Activated T-helper 1 cell treated with anti-CD3 and anti-CD28 coated beads, Interleukin-12 subunit alpha, Interleukin-12 subunit beta, Interleukin-2, Interleukin-4 antibody, amounts not matched to agents 30 ng/mL and 10 ng/mL and 1 ng/mL, durations not matched to agents 14 hours and 24 hours and 36 hours (primary cell): ENCODE measurements at regions of chr16 and their contacts with region 1.

Region 1: DNA sequence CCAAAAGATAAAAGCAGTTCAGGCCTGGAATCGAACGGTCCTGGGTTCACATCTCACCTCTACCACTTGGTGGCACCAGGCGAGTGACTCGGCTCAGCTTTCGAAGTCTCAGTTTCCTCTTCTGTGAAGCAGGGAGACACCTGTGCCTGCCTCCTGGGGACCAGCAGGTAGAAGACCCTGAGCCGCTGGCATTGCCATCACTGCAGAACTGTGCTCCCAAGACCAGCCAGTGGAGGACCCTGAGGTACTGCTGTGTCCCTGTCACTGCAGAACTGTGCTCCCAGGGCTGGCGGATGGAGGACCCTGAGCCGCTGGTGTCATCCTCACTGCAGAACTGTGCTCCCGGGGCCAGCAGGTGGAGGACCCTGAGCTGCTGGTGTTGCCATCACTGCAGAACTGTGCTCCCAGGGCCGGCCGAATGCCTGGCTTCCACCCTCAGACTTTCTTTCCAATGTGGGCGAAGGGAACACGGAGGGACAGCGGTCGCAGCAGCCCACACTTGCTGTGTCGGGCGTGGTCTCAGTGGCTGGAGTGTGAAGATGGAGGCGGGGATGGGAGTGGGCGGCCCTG is 8.7 kb upstream of the SLC7A5 start:
- DNase-seq: no peak
- H3K4me3 Mint-ChIP-seq: peak overlapping the region; percentile 45
- H3K27ac Mint-ChIP-seq: peak overlapping the region; percentile 79
- H3K4me1 Mint-ChIP-seq: peaks cover 47% of the 10 kb centered on the region
- H3K27me3 Mint-ChIP-seq: peaks cover 2% of the 10 kb centered on the region

Region 2: GRCh38 chr16:87492721-87493607 is 385.1 kb before region 1 on chr16 and contains the start of gene ZCCHC14:
- intact Hi-C with region 1: loop called (anchors 10 kb)
- DNase-seq: peak; percentile 98
- H3K4me3 Mint-ChIP-seq: peak within 1 kb of the TSS; percentile 80
- H3K27ac Mint-ChIP-seq: peak within 1 kb of the TSS; percentile 82
- H3K4me1 Mint-ChIP-seq: peaks cover 53% of the 10 kb centered on the region
- H3K27me3 Mint-ChIP-seq: peaks cover 34% of the 10 kb centered on the region
- total RNA-seq, gene ZCCHC14: 9.9 and 11.0 TPM in 2 replicates

Region 3: DNA sequence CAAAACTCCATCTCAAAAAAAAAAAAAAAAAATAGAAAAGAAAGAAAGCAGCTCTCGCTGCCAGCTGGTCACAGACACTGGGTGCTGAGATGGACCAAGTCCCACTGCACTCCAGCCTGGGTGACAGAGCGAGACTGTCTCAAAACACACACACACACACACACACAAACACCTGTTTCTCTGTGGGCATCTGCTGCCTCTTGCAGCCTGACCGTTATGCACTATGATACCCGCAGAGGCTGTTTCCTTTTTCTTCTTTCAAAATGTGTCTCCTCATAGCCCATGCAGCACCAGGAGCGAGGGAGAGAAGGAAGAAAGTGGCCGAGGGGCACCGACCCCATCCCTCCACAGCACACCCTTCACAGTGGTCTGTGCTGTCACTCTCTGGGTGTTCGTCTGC is 75.4 kb before region 1 on chr16:
- intact Hi-C with region 1: no loop called
- DNase-seq: no peak
- H3K4me3 Mint-ChIP-seq: no peak overlapping the region
- H3K27ac Mint-ChIP-seq: no peak overlapping the region
- H3K4me1 Mint-ChIP-seq: peaks cover 16% of the 10 kb centered on the region
- H3K27me3 Mint-ChIP-seq: no peaks in the 10 kb centered on the region

Region 4: DNA sequence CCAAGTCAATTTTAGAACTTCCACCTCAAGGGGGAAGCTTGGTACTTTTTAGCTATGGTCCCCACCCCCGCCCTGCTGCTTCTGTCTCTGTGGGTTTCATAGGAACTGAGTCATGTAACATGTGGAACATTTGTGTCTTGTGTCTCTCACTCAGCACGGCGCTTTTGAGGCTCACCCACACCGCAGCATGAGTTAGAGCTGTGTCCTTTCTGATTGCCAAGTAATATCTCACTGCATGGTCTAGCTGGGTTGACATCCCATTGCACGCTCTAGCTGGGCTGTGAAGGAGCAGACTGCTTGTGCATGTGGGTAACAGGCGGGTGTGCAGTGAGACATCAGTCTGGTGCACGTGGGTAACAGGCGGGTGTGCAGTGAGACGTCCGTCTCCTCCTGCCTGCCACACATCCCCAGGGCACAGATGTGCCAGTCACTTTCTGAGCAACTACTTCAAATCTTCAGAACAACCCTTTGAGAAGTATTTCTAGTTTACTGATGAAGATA is 17.7 kb after region 1 on chr16:
- intact Hi-C with region 1: loop called (anchors 1 kb)
- DNase-seq: peak; percentile 83
- H3K4me3 Mint-ChIP-seq: peak overlapping the region; percentile 76
- H3K27ac Mint-ChIP-seq: peak overlapping the region; percentile 100
- H3K4me1 Mint-ChIP-seq: peaks cover 56% of the 10 kb centered on the region
- H3K27me3 Mint-ChIP-seq: no peaks in the 10 kb centered on the region

Region 5: DNA sequence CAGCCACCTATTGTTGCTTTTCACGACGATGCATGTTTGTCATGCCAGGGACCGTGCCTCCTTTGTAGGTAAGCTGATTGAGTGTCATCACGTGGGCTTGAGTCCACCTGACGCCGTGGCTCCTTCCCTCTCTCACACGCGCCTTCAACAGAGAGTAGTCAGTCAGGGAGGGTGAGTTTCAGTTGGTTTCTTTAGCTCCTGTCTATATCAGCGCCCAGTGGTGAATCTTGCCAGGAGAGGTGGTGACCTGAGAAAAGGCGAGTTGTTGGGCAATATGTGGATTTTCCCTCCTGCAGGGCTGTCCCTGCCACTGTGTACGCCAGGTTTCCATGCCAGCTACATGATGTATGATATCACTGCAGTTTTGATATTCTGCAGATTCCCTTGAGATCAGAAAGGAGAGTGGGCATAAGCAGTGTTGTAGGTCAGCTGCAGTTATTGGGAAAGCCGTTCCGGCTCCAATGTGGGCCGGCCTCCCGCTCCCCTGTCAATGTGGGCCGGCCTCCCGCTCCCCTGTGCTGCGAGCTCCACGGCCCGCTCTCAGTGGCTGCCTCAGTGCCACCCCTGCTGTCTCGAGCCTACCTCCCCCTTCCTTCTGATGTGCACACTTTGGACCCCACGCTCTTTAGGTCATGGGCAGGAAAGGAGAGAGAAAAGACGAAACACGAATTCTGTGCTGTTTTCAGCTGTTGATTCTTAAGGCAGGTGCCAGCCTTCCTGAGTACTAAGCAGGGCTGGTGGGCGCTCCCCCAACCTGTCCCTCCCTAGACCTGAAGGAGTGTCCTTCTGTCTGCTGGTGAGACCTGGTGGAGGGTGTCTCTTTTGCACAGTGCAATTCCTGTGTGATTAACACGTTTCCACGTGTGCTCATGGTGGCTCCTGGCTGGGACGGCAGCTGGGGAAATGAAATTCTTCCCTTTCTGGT is 104.7 kb after region 1 on chr16:
- intact Hi-C with region 1: loop called (anchors 1 kb)
- DNase-seq: no peak
- H3K4me3 Mint-ChIP-seq: peak overlapping the region; percentile 49
- H3K27ac Mint-ChIP-seq: peak overlapping the region; percentile 73
- H3K4me1 Mint-ChIP-seq: peaks cover 70% of the 10 kb centered on the region
- H3K27me3 Mint-ChIP-seq: no peaks in the 10 kb centered on the region